CD8-positive, alpha-beta T cell (primary cell): ENCODE measurements at regions of chr1 and their contacts with region 1.

Region 1: GRCh38 chr1:6475381-6476133 is 9.6 kb upstream of the TNFRSF25 start:
- DNase-seq: peak; percentile 63 to 93 (median 82)
- ATAC-seq: peak; percentile 99
- H3K4me3 ChIP-seq: no peak overlapping the region
- H3K4me3 Mint-ChIP-seq: no peak overlapping the region
- H3K27ac ChIP-seq: no peak overlapping the region
- H3K27ac Mint-ChIP-seq: no peak overlapping the region
- H3K4me1 ChIP-seq: peaks cover 8% of the 10 kb centered on the region
- H3K4me1 Mint-ChIP-seq: peaks cover 6% of the 10 kb centered on the region
- H3K27me3 ChIP-seq: no peaks in the 10 kb centered on the region
- H3K27me3 Mint-ChIP-seq: no peaks in the 10 kb centered on the region
- CTCF ChIP-seq: peak; percentile 84

Region 2: DNA sequence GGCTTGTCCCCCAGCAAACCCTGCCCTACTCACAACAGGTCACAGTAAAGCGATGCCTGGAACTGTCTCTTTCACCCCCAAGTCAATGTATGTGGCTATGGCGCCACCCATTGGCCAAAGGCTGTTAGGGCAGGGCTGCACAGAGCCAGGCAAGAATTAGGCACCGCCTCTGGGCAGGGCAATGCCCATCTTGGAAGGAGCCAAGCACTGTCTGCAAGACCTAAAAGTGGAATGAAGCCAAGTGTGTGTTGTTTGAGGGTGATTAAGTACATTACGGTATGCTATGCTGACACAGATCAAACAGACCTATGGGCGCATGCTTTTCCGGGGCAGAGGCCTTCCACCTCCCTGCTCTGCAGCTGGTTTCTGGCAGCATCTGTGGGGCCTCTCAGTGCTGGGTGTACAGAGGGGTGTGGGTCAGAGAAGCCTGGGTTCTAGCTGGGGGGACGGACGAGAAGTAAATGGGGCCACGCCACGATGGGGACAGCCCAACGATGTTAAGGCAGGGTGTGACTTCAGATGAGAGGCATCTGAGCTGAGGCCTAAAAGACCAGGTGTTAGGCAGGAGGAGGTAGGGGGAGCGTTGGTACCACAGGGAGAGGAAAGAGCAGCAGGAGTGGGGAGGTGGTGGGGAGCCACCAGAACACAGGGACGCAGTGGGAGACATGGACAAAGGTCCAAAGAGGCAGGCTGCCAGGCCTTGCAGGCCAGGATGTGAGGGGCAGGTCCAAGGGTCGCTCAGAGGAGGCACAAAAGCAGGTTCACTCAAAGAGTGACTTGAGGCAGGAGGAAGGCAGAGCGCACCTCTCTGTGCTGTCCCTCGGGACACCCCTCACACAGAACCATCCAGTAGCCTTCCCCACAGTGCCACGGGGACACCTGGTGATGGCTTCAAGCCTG is 131.8 kb before region 1 on chr1:
- CTCF ChIA-PET with region 1: interaction called, 3 read pairs
- POLR2A ChIA-PET with region 1: no interaction called
- intact Hi-C with region 1: loop called (anchors 1 kb)
- DNase-seq: peak; percentile 22 to 73 (median 61)
- ATAC-seq: peak; percentile 63
- H3K4me3 ChIP-seq: no peak overlapping the region
- H3K4me3 Mint-ChIP-seq: no peak overlapping the region
- H3K27ac ChIP-seq: no peak overlapping the region
- H3K27ac Mint-ChIP-seq: no peak overlapping the region
- H3K4me1 ChIP-seq: peaks cover 13% of the 10 kb centered on the region
- H3K4me1 Mint-ChIP-seq: peaks cover 10% of the 10 kb centered on the region
- H3K27me3 ChIP-seq: no peaks in the 10 kb centered on the region
- H3K27me3 Mint-ChIP-seq: no peaks in the 10 kb centered on the region
- CTCF ChIP-seq: peak; percentile 52

Region 3: GRCh38 chr1:6423321-6423999 is 52.1 kb before region 1 on chr1:
- CTCF ChIA-PET with region 1: interaction called, 6 read pairs
- POLR2A ChIA-PET with region 1: no interaction called
- intact Hi-C with region 1: loop called (anchors 1 kb)
- DNase-seq: peak; percentile 49 to 83 (median 75)
- ATAC-seq: peak; percentile 84
- H3K4me3 ChIP-seq: peak overlapping the region; percentile 12 to 46
- H3K4me3 Mint-ChIP-seq: peak overlapping the region; percentile 72
- H3K27ac ChIP-seq: no peak overlapping the region
- H3K27ac Mint-ChIP-seq: no peak overlapping the region
- H3K4me1 ChIP-seq: peaks cover 33% of the 10 kb centered on the region
- H3K4me1 Mint-ChIP-seq: peaks cover 9% of the 10 kb centered on the region
- H3K27me3 ChIP-seq: peaks cover 26 to 53% of the 10 kb centered on the region in 2 experiments
- H3K27me3 Mint-ChIP-seq: peaks cover 37% of the 10 kb centered on the region
- CTCF ChIP-seq: peak; percentile 72

Region 4: GRCh38 chr1:6445062-6445763 is 30.3 kb before region 1 on chr1:
- CTCF ChIA-PET with region 1: interaction called, 32 read pairs
- POLR2A ChIA-PET with region 1: interaction called, 3 read pairs
- intact Hi-C with region 1: loop called (anchors 1 kb)
- DNase-seq: peak in 5 of 9 experiments; percentile 46 to 56 (median 50)
- ATAC-seq: no peak
- H3K4me3 ChIP-seq: no peak overlapping the region
- H3K4me3 Mint-ChIP-seq: no peak overlapping the region
- H3K27ac ChIP-seq: no peak overlapping the region
- H3K27ac Mint-ChIP-seq: no peak overlapping the region
- H3K4me1 ChIP-seq: peaks cover 26% of the 10 kb centered on the region
- H3K4me1 Mint-ChIP-seq: peaks cover 27% of the 10 kb centered on the region
- H3K27me3 ChIP-seq: peaks cover 24 to 30% of the 10 kb centered on the region in 2 experiments
- H3K27me3 Mint-ChIP-seq: peaks cover 37% of the 10 kb centered on the region
- CTCF ChIP-seq: peak; percentile 23

Region 5: DNA sequence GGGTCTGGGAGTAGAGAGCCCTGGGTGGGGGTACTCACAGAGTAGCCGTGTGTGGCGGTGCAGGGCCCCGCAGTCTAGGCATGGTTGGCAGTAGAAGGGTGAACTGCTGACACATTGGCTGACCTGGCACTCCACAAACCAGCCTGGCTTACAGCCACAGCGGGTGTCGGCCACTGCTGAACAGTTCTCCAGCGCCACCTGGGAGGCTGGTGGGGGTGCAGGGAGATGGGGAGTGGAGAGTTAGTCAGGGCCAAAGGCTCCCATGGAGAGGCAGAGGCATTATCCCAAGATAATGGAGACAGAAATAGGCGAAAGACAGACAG is 11.1 kb before region 1 on chr1:
- CTCF ChIA-PET with region 1: interaction called, 13 read pairs
- POLR2A ChIA-PET with region 1: interaction called, 4 read pairs
- intact Hi-C with region 1: loop called in 1 of 2 experiments (anchors 1 kb)
- DNase-seq: peak in 2 of 9 experiments; percentile 38 to 44
- ATAC-seq: no peak
- H3K4me3 ChIP-seq: peak overlapping the region; percentile 88 to 95
- H3K4me3 Mint-ChIP-seq: peak overlapping the region; percentile 91
- H3K27ac ChIP-seq: peak overlapping the region; percentile 72 to 87
- H3K27ac Mint-ChIP-seq: peak overlapping the region; percentile 95
- H3K4me1 ChIP-seq: peaks cover 52% of the 10 kb centered on the region
- H3K4me1 Mint-ChIP-seq: peaks cover 44% of the 10 kb centered on the region
- H3K27me3 ChIP-seq: no peaks in the 10 kb centered on the region
- H3K27me3 Mint-ChIP-seq: no peaks in the 10 kb centered on the region
- CTCF ChIP-seq: no peak